Heart left ventricle (tissue), 16 donors: ENCODE measurements at regions of chr4 and their contacts with region 1.

Region 1: DNA sequence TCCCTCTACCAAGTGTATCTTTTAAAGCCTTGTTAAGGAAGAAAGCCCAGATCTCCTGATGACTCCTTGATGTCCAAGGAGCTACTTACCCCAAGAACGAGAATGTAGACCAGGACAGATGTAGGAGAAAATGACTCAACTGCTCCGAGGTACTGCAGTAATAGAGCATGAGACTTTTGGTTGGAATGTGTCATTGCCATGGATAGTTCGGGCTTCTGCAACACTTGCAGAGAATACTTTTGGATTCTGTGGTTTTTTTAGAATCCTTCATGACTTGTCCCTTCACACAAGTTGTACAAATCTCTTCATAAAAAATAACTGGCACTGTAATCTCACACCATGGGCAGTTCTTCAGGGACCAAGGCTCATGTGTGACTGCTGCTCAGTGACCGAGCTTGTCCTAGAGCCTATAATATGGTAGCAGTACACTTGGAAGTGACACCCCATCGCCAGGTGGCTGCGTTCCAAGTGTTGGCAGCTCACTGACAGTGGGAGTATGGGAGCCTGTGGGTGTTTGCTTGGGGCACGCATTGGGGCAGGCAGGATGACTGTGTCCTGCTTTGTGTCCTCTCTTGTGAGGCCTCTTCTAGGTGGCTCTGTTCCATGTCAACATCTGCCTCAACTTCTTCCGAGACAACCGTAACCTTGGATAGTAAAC is 87.9 kb upstream of the WDR1 start:
- DNase-seq: peak in 4 of 5 donors; percentile 37 to 71 (median 48)
- ATAC-seq: peak; percentile 54 to 75 (median 58)
- H3K4me3 ChIP-seq: no peak overlapping the region
- H3K27ac ChIP-seq: no peak overlapping the region
- H3K4me1 ChIP-seq: peaks cover 0 to 2% (median 0%) of the 10 kb centered on the region in 12 donors
- H3K27me3 ChIP-seq: peaks cover 0 to 5% (median 0%) of the 10 kb centered on the region in 9 donors
- CTCF ChIP-seq: no peak
- POLR2A ChIP-seq: no peak

Region 2: GRCh38 chr4:10253755-10254154 is 49.2 kb after region 1 on chr4:
- intact Hi-C with region 1: loop called in 1 of 10 experiments (anchors 10 kb)
- DNase-seq: no peak
- ATAC-seq: no peak
- H3K4me3 ChIP-seq: no peak overlapping the region
- H3K27ac ChIP-seq: no peak overlapping the region
- H3K4me1 ChIP-seq: no peaks in the 10 kb centered on the region
- H3K27me3 ChIP-seq: peaks cover 0 to 3% (median 0%) of the 10 kb centered on the region in 9 donors
- CTCF ChIP-seq: no peak
- POLR2A ChIP-seq: no peak

Region 3: GRCh38 chr4:10321931-10322330 is 117.4 kb after region 1 on chr4:
- intact Hi-C with region 1: no loop called
- DNase-seq: no peak
- ATAC-seq: no peak
- H3K4me3 ChIP-seq: no peak overlapping the region
- H3K27ac ChIP-seq: no peak overlapping the region
- H3K4me1 ChIP-seq: no peaks in the 10 kb centered on the region
- H3K27me3 ChIP-seq: peaks cover 0 to 7% (median 0%) of the 10 kb centered on the region in 9 donors
- CTCF ChIP-seq: no peak
- POLR2A ChIP-seq: no peak

Region 4: GRCh38 chr4:10380735-10381134 is 176.2 kb after region 1 on chr4:
- intact Hi-C with region 1: no loop called
- DNase-seq: no peak
- ATAC-seq: no peak
- H3K4me3 ChIP-seq: no peak overlapping the region
- H3K27ac ChIP-seq: no peak overlapping the region
- H3K4me1 ChIP-seq: no peaks in the 10 kb centered on the region
- H3K27me3 ChIP-seq: no peaks in the 10 kb centered on the region
- CTCF ChIP-seq: no peak
- POLR2A ChIP-seq: no peak